ENCODE measurements at regions of chr5 and their contacts with region 1.

Region 1: GRCh38 chr5:171387345-171387969 is at the start of gene NPM1:
- DNase-seq: peak; percentile 87 to 92 (median 92)
- H3K4me3 ChIP-seq: peak within 1 kb of the TSS; percentile 74 to 93 (median 92)
- H3K4me3 Mint-ChIP-seq: peak within 1 kb of the TSS; percentile 97 to 98
- H3K27ac ChIP-seq: peak within 1 kb of the TSS; percentile 81
- H3K27ac Mint-ChIP-seq: peak within 1 kb of the TSS; percentile 85 to 97 (median 94)
- H3K4me1 ChIP-seq: peaks cover 23 to 37% of the 10 kb centered on the region in 2 donors
- H3K4me1 Mint-ChIP-seq: peaks cover 42% of the 10 kb centered on the region
- H3K27me3 ChIP-seq: no peaks in the 10 kb centered on the region
- H3K27me3 Mint-ChIP-seq: peaks cover 2 to 5% (median 3%) of the 10 kb centered on the region in 3 donors
- CTCF ChIP-seq: no peak
- polyA plus RNA-seq, gene NPM1: 102 to 191 (median 188) TPM

Region 2: GRCh38 chr5:171342362-171343111 is 44.9 kb before region 1 on chr5:
- intact Hi-C with region 1: no loop called
- DNase-seq: peak; percentile 6 to 28 (median 25)
- H3K4me3 ChIP-seq: no peak overlapping the region
- H3K4me3 Mint-ChIP-seq: no peak overlapping the region
- H3K27ac ChIP-seq: no peak overlapping the region
- H3K27ac Mint-ChIP-seq: peak overlapping the region in 1 of 7 donors; percentile 50
- H3K4me1 ChIP-seq: no peaks in the 10 kb centered on the region
- H3K4me1 Mint-ChIP-seq: no peaks in the 10 kb centered on the region
- H3K27me3 ChIP-seq: peaks cover 5 to 12% of the 10 kb centered on the region in 2 donors
- H3K27me3 Mint-ChIP-seq: peaks cover 26 to 36% (median 36%) of the 10 kb centered on the region in 3 donors
- CTCF ChIP-seq: peak; percentile 67

Region 3: DNA sequence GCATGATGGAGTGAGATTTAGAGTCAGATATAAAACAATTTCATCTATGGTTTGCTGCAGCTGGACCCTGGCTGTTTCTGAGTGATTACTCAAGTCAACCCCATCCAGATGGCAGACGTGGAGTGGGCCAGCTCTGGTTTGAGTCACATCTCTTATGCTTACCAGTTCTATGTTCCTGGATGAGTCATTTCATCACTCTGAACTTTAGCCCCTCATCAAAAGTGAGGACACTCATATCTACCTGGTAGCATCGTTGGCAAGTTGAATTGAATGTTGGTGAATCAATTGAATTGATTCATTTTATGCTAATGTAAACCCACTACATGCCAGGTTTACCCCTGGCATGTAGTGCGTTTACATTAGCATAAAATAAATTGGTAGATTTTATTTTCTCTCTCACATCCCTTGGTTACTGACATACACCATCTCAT is 208.4 kb after region 1 on chr5:
- intact Hi-C with region 1: no loop called
- DNase-seq: no peak
- H3K4me3 ChIP-seq: no peak overlapping the region
- H3K4me3 Mint-ChIP-seq: no peak overlapping the region
- H3K27ac ChIP-seq: no peak overlapping the region
- H3K27ac Mint-ChIP-seq: no peak overlapping the region
- H3K4me1 ChIP-seq: peaks cover 8 to 10% of the 10 kb centered on the region in 2 donors
- H3K4me1 Mint-ChIP-seq: peaks cover 19% of the 10 kb centered on the region
- H3K27me3 ChIP-seq: no peaks in the 10 kb centered on the region
- H3K27me3 Mint-ChIP-seq: peaks cover 0 to 7% (median 2%) of the 10 kb centered on the region in 3 donors
- CTCF ChIP-seq: no peak

Region 4: GRCh38 chr5:172006321-172007174 is 619.1 kb after region 1 on chr5 and contains the start of gene FBXW11:
- intact Hi-C with region 1: loop called in 1 of 2 experiments (anchors 5 kb)
- DNase-seq: peak; percentile 93 to 98 (median 96)
- H3K4me3 ChIP-seq: peak within 1 kb of the TSS; percentile 61 to 100 (median 93)
- H3K4me3 Mint-ChIP-seq: peak within 1 kb of the TSS; percentile 98 to 99
- H3K27ac ChIP-seq: peak within 1 kb of the TSS; percentile 92 to 97
- H3K27ac Mint-ChIP-seq: peak within 1 kb of the TSS; percentile 96 to 100 (median 99)
- H3K4me1 ChIP-seq: peaks cover 42 to 51% of the 10 kb centered on the region in 2 donors
- H3K4me1 Mint-ChIP-seq: peaks cover 42% of the 10 kb centered on the region
- H3K27me3 ChIP-seq: no peaks in the 10 kb centered on the region
- H3K27me3 Mint-ChIP-seq: no peaks in the 10 kb centered on the region
- CTCF ChIP-seq: no peak
- polyA plus RNA-seq, gene FBXW11: 15.0 to 24.5 (median 18.2) TPM